ENCODE measurements at regions of chr7 and their contacts with region 1.

Region 1: GRCh38 chr7:157004050-157004838 is 6.2 kb downstream of the MNX1 start:
- DNase-seq: no peak
- H3K4me3 Mint-ChIP-seq: no peak overlapping the region
- H3K27ac Mint-ChIP-seq: no peak overlapping the region
- H3K4me1 Mint-ChIP-seq: peaks cover 10% of the 10 kb centered on the region
- H3K27me3 Mint-ChIP-seq: peaks cover 64% of the 10 kb centered on the region

Region 2: DNA sequence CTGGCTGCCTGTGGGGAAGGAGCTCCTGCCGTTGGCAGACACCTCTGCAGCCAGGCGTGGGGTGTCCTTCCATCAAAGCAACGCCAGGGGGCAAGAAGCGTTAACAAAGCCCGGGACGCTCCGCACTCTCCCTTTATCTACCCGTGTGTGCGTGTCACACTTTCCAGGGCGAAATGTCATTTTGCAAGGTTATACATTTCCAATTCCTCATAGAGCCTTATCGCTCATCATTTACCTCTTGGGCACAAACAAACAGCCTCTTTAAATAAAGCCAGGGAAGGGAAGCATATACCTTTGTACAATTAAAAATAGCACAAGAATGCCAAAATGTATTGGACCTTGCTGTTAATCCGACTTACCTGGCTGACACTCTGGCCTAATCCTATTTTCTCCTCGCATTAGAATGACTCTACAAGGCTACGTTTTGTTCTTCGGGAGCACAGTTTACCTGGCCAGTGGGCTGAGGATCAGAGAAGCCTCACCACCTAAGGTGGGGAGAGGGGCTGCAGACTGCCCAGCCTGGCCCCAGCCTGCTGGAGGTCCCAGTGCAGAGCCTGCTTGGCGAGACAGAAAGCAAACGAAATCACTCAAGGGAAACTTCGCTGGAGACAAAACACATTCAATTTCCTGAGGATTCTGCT is 1623.9 kb before region 1 on chr7:
- intact Hi-C with region 1: loop called (anchors 2 kb)
- DNase-seq: peak; percentile 57
- H3K4me3 Mint-ChIP-seq: no peak overlapping the region
- H3K27ac Mint-ChIP-seq: no peak overlapping the region
- H3K4me1 Mint-ChIP-seq: peaks cover 15% of the 10 kb centered on the region
- H3K27me3 Mint-ChIP-seq: peaks cover 83% of the 10 kb centered on the region

Region 3: GRCh38 chr7:155456738-155457564 is 1547.3 kb before region 1 on chr7:
- intact Hi-C with region 1: loop called (anchors 2 kb)
- DNase-seq: no peak
- H3K4me3 Mint-ChIP-seq: peak overlapping the region; percentile 37
- H3K27ac Mint-ChIP-seq: peak overlapping the region; percentile 67
- H3K4me1 Mint-ChIP-seq: peaks cover 9% of the 10 kb centered on the region
- H3K27me3 Mint-ChIP-seq: peaks cover 68% of the 10 kb centered on the region

Region 4: GRCh38 chr7:155466814-155467733 is 1537.2 kb before region 1 on chr7:
- intact Hi-C with region 1: loop called (anchors 2 kb)
- DNase-seq: peak; percentile 38
- H3K4me3 Mint-ChIP-seq: no peak overlapping the region
- H3K27ac Mint-ChIP-seq: no peak overlapping the region
- H3K4me1 Mint-ChIP-seq: peaks cover 3% of the 10 kb centered on the region
- H3K27me3 Mint-ChIP-seq: peaks cover 81% of the 10 kb centered on the region

Region 5: DNA sequence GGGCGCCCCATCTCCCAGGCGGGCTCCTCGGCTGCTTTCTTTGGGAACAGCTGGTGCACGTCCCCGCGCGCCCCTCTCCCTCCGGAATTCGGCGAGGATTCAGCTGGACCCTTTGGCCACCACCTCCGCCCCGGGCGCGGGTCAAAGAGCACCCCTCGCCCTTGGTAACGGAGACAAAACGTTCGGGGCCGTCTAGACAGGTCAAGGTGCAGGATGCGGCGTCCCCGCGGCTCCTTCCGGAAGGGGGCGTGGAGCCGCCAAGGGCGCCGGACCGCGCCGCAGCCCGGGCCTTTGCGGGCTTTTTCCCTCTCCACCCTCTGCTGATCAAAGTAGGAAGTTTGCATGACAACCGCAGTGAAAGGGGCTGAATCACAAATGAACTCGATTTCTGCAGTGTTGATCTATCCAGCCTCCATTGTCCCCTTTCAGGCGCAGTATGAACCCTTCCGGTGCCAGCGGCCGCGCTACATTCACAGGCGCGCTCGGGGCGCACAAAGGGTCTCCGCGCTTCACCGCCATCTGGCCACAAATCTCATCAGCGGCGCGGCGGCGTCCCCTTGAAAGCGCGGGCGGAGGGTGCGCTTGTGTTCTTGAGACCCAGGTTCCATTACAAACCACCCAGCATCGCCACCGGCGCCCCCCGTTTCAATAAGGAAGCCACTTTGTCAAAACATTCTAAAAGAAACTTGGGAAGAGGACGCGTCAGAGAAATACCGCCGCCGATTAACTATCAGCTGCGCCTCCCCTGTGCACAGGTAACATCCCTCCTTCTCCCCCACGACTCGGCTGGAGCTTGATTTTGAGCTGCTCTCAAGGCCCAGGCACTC is 1494.3 kb before region 1 on chr7:
- intact Hi-C with region 1: loop called (anchors 2 kb)
- DNase-seq: no peak
- H3K4me3 Mint-ChIP-seq: peak overlapping the region; percentile 47
- H3K27ac Mint-ChIP-seq: no peak overlapping the region
- H3K4me1 Mint-ChIP-seq: peaks cover 16% of the 10 kb centered on the region
- H3K27me3 Mint-ChIP-seq: peaks cover 80% of the 10 kb centered on the region

Region 6: GRCh38 chr7:155804897-155805825 is 1199.1 kb before region 1 on chr7:
- intact Hi-C with region 1: loop called (anchors 1 kb)
- DNase-seq: peak; percentile 51
- H3K4me3 Mint-ChIP-seq: peak overlapping the region; percentile 42
- H3K27ac Mint-ChIP-seq: no peak overlapping the region
- H3K4me1 Mint-ChIP-seq: peaks cover 17% of the 10 kb centered on the region
- H3K27me3 Mint-ChIP-seq: peaks cover 59% of the 10 kb centered on the region

Region 7: DNA sequence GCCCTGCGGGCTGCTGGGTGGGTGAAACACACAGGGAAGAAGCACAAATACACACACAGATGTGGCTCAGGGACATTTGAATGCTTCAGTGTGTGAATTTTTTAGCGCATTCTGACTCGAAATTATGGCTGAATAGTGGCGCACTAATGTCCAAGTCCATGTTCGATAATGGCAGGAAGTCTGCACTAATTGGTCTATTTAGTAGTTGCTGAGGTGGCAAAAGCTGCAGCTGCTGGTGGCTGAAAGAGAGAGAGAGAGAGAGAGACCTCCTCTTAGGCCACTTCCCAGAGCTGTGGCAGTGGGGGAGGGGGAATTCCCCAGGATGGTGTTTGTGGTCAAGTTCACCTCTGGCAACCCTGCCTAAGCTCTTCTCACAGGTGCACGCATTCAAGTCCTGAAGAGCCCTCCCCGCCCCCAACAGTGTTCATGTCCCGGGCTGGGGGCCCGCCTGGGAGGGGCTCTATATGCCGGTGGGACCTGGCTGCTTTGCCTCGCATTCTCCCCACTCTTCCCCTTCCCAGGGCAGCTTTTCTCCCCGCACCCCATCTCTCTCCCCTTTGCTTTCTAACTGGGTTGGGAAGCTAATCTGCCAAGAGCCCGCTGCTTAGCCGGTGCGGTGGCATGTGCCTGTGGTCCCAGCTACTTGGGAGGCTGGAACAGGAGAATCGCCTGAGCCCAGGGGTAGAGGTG is 12.3 kb after region 1 on chr7:
- intact Hi-C with region 1: loop called (anchors 2 kb)
- DNase-seq: no peak
- H3K4me3 Mint-ChIP-seq: no peak overlapping the region
- H3K27ac Mint-ChIP-seq: no peak overlapping the region
- H3K4me1 Mint-ChIP-seq: peaks cover 17% of the 10 kb centered on the region
- H3K27me3 Mint-ChIP-seq: peaks cover 80% of the 10 kb centered on the region

Region 8: GRCh38 chr7:157165987-157166386 is 161.7 kb after region 1 on chr7:
- intact Hi-C with region 1: no loop called
- DNase-seq: no peak
- H3K4me3 Mint-ChIP-seq: no peak overlapping the region
- H3K27ac Mint-ChIP-seq: no peak overlapping the region
- H3K4me1 Mint-ChIP-seq: peaks cover 1% of the 10 kb centered on the region
- H3K27me3 Mint-ChIP-seq: no peaks in the 10 kb centered on the region

Region 9: DNA sequence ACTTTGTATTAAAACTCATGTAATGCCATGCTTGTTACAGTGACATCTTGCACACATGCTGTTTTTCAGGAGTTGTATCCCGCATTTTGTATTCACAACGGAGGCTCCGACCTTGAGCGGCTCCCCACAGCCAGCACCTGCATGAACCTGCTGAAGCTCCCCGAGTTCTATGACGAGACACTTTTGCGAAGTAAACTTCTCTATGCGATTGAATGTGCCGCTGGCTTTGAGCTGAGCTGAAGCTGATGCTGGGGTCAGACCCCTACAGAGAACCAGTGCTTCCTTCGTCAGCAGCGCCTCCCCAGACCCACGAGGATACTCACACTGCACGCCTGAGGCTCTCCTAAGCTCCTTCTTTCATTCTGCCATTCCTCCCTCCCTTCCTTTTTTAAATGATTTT is 263.3 kb after region 1 on chr7:
- intact Hi-C with region 1: no loop called
- DNase-seq: no peak
- H3K4me3 Mint-ChIP-seq: no peak overlapping the region
- H3K27ac Mint-ChIP-seq: no peak overlapping the region
- H3K4me1 Mint-ChIP-seq: peaks cover 5% of the 10 kb centered on the region
- H3K27me3 Mint-ChIP-seq: no peaks in the 10 kb centered on the region